ENCODE measurements at regions of chr3 and their contacts with region 1.

Region 1: GRCh38 chr3:57397175-57398026 is 104.9 kb upstream of the ASB14 start:
- DNase-seq: peak; percentile 62
- H3K4me3 ChIP-seq: no peak overlapping the region
- H3K27ac ChIP-seq: no peak overlapping the region
- H3K4me1 ChIP-seq: no peaks in the 10 kb centered on the region
- H3K27me3 ChIP-seq: no peaks in the 10 kb centered on the region
- CTCF ChIP-seq: peak; percentile 90 to 95
- POLR2A ChIP-seq: no peak

Region 2: GRCh38 chr3:57411715-57412114 is 14.3 kb after region 1 on chr3:
- CTCF ChIA-PET with region 1: interaction called, 15 read pairs
- POLR2A ChIA-PET with region 1: no interaction called
- dilution Hi-C with region 1: no loop called
- intact Hi-C with region 1: no loop called
- DNase-seq: no peak
- H3K4me3 ChIP-seq: no peak overlapping the region
- H3K27ac ChIP-seq: no peak overlapping the region
- H3K4me1 ChIP-seq: no peaks in the 10 kb centered on the region
- H3K27me3 ChIP-seq: no peaks in the 10 kb centered on the region
- CTCF ChIP-seq: no peak
- POLR2A ChIP-seq: no peak

Region 3: GRCh38 chr3:57464801-57465200 is 67.4 kb after region 1 on chr3:
- CTCF ChIA-PET with region 1: interaction called, 17 read pairs
- POLR2A ChIA-PET with region 1: no interaction called
- dilution Hi-C with region 1: no loop called
- intact Hi-C with region 1: no loop called
- DNase-seq: peak; percentile 26
- H3K4me3 ChIP-seq: no peak overlapping the region
- H3K27ac ChIP-seq: no peak overlapping the region
- H3K4me1 ChIP-seq: peaks cover 9% of the 10 kb centered on the region
- H3K27me3 ChIP-seq: no peaks in the 10 kb centered on the region
- CTCF ChIP-seq: peak in 1 of 2 donors; percentile 4
- POLR2A ChIP-seq: no peak

Region 4: GRCh38 chr3:57582474-57583168 is 185.2 kb after region 1 on chr3:
- CTCF ChIA-PET with region 1: interaction called, 48 read pairs
- POLR2A ChIA-PET with region 1: no interaction called
- dilution Hi-C with region 1: no loop called
- intact Hi-C with region 1: loop called (anchors 2 kb)
- DNase-seq: no peak
- H3K4me3 ChIP-seq: no peak overlapping the region
- H3K27ac ChIP-seq: no peak overlapping the region
- H3K4me1 ChIP-seq: no peaks in the 10 kb centered on the region
- H3K27me3 ChIP-seq: no peaks in the 10 kb centered on the region
- CTCF ChIP-seq: peak in 1 of 2 donors; percentile 22
- POLR2A ChIP-seq: no peak

Region 5: DNA sequence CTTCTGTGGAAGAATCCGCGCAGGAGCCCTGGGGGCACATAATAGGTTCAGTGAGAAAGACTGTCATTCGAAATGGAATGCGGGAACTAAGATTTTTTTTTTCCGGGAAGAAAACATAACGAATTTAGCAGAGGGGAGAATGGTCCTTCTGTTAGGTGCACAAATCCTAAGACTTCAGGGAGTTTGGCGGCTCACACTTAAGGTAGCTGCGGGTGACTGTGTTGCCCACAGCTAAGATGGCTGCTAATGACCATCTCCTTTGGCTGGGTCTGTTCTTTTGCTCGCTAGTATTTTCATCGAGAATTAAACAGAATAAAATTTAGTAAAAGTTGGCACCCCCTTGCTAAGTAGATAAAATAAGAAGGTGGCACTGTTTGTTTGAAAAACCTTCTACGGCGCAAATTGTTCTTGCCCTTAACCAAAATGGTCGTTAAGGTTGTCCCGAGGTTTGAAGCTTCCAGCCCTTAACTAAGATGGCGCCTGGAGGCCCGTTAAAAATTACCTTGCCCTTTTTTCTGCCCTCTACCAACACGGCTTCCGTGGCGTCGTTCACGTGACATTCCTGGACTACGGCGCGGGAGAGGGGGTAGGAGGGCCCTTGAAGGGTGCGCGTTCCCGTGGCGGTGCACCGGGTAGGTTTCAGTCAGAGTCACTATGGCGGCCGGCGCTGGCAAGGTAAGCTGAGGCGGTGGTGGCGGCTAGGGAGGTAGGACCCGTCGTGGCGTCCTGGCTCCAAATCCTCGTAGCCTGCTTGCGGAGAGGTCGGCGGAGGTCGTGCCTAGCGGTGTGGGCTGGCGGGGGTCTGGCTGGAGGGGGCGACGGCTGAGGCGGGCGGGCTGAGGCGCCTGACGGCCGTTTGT is 358.5 kb after region 1 on chr3 and contains the start of gene SLMAP:
- CTCF ChIA-PET with region 1: interaction called, 10 read pairs
- POLR2A ChIA-PET with region 1: no interaction called
- dilution Hi-C with region 1: no loop called
- intact Hi-C with region 1: loop called (anchors 2 kb)
- DNase-seq: peak; percentile 94
- H3K4me3 ChIP-seq: peak within 1 kb of the TSS; percentile 73 to 97 (median 84)
- H3K27ac ChIP-seq: peak within 1 kb of the TSS; percentile 92
- H3K4me1 ChIP-seq: peaks cover 35% of the 10 kb centered on the region
- H3K27me3 ChIP-seq: no peaks in the 10 kb centered on the region
- CTCF ChIP-seq: no peak
- POLR2A ChIP-seq: peak; percentile 43
- total RNA-seq, gene SLMAP: 45.7 and 54.7 TPM in 2 replicates

Measured in endothelial cell of umbilical vein (primary cell).